K562 (cell line): ENCODE measurements at regions of chr2 and their contacts with region 1.

Region 1: GRCh38 chr2:172465417-172466334 is 38.3 kb downstream of the ITGA6 start:
- DNase-seq: peak; percentile 68 to 76 (median 72)
- ATAC-seq: peak; percentile 90
- H3K4me3 ChIP-seq: no peak overlapping the region
- H3K27ac ChIP-seq: no peak overlapping the region
- H3K4me1 ChIP-seq: no peaks in the 10 kb centered on the region
- H3K27me3 ChIP-seq: peaks cover 11 to 23% of the 10 kb centered on the region in 2 experiments; a peak in 4 of 5 replicates
- CTCF ChIP-seq: peak; percentile 86 to 92 (median 90)
- EP300 ChIP-seq: no peak
- POLR2A ChIP-seq: no peak
- RAD21 ChIP-seq: peak; percentile 90 to 92

Region 2: DNA sequence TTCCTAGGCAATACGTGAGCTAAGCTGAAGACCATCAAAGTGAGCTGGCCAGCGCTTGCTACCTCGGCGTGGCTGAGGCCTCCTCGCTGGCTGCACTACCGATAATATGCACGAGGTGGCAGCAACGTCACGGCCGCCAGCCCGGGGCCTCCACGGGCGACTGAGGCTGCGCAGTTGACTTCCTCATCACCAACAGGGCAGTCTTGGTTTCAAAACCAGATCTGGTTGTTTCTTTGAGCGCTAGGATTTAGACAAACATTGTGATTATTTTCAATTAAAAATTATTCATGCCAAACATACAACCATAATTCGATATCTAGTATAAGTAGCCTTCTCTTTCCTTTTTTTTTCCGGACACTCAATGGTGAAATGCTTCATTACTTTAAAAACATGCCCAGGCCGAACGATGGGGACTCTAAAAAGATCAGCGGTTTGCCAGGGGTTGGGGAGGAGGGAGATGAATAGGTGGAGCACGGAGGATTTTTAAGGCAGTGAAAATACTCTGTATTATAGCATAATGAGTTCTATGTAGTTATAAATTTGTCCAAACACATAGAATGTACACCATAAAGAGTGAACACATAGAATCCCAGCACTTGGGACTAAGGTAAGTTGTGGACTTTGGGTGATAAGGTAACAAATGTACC is 891.4 kb before region 1 on chr2:
- CTCF ChIA-PET with region 1: interaction called, 3 read pairs
- POLR2A ChIA-PET with region 1: no interaction called
- in situ Hi-C with region 1: loop called (anchors 25 kb)
- intact Hi-C with region 1: loop called (anchors 5 kb)
- DNase-seq: peak; percentile 90 to 99 (median 97)
- ATAC-seq: peak; percentile 99
- H3K4me3 ChIP-seq: no peak overlapping the region
- H3K27ac ChIP-seq: no peak overlapping the region
- H3K4me1 ChIP-seq: peaks cover 0 to 3% of the 10 kb centered on the region in 2 experiments; a peak in 1 of 5 replicates
- H3K27me3 ChIP-seq: no peaks in the 10 kb centered on the region
- CTCF ChIP-seq: peak; percentile 96 to 99 (median 97)
- EP300 ChIP-seq: 0 out of 2 replicates have a peak, but pooled peaks have one; percentile 3
- POLR2A ChIP-seq: no peak
- RAD21 ChIP-seq: peak; percentile 95 to 97

Region 3: GRCh38 chr2:171598713-171599319 is 866.9 kb before region 1 on chr2:
- CTCF ChIA-PET with region 1: no interaction called
- POLR2A ChIA-PET with region 1: no interaction called
- in situ Hi-C with region 1: loop called (anchors 25 kb)
- intact Hi-C with region 1: no loop called
- DNase-seq: peak; percentile 79 to 82 (median 81)
- ATAC-seq: peak; percentile 99
- H3K4me3 ChIP-seq: no peak overlapping the region
- H3K27ac ChIP-seq: no peak overlapping the region
- H3K4me1 ChIP-seq: no peaks in the 10 kb centered on the region
- H3K27me3 ChIP-seq: peaks cover 15 to 17% of the 10 kb centered on the region in 2 experiments; a peak in 4 of 5 replicates
- CTCF ChIP-seq: peak; percentile 76 to 90 (median 88)
- EP300 ChIP-seq: no peak
- POLR2A ChIP-seq: no peak
- RAD21 ChIP-seq: peak; percentile 70 to 89

Region 4: DNA sequence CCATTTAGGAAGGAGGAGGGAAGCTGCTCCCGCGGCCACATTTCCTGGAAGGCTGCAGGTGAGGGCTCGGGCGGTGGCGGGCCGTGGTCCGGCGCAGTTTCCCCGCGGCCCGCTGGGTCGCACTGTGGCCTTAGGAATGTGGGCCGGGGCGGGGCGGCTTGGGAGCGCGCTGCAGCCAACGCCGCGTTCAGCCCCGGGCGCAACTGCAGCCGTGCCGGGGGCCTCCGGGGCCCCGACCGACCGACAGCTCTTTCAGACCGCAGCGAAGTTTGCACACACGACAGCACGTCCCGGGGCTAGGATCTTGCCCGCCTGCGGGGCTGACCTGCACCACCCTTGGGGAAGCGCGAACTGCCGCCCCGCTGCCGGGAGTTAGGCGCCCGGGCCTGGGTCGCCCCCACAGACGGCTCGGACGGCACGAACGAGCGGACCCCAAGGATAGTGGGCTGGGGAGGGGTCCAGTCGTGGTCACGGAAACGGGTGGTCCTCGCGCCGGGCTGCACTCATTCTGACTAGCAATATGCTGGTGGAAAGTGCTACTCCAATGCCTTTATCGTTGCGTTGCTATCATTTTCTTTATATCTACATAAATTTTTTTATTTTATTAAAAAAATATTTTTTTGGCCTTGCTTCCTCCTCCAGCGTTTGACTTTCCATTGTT is 293.0 kb before region 1 on chr2:
- CTCF ChIA-PET with region 1: interaction called, 27 read pairs
- POLR2A ChIA-PET with region 1: no interaction called
- in situ Hi-C with region 1: loop called (anchors 5 kb)
- intact Hi-C with region 1: loop called (anchors 1 kb)
- DNase-seq: peak; percentile 63 to 80 (median 68)
- ATAC-seq: peak; percentile 100
- H3K4me3 ChIP-seq: peak overlapping the region; percentile 6; the same call in 1 of the 2 replicates
- H3K27ac ChIP-seq: no peak overlapping the region
- H3K4me1 ChIP-seq: peaks cover 0 to 7% of the 10 kb centered on the region in 2 experiments; a peak in 2 of 5 replicates
- H3K27me3 ChIP-seq: peaks cover 24 to 29% of the 10 kb centered on the region in 2 experiments
- CTCF ChIP-seq: peak; percentile 78 to 91 (median 80)
- EP300 ChIP-seq: no peak
- POLR2A ChIP-seq: no peak
- RAD21 ChIP-seq: peak; percentile 92 to 95

Region 5: DNA sequence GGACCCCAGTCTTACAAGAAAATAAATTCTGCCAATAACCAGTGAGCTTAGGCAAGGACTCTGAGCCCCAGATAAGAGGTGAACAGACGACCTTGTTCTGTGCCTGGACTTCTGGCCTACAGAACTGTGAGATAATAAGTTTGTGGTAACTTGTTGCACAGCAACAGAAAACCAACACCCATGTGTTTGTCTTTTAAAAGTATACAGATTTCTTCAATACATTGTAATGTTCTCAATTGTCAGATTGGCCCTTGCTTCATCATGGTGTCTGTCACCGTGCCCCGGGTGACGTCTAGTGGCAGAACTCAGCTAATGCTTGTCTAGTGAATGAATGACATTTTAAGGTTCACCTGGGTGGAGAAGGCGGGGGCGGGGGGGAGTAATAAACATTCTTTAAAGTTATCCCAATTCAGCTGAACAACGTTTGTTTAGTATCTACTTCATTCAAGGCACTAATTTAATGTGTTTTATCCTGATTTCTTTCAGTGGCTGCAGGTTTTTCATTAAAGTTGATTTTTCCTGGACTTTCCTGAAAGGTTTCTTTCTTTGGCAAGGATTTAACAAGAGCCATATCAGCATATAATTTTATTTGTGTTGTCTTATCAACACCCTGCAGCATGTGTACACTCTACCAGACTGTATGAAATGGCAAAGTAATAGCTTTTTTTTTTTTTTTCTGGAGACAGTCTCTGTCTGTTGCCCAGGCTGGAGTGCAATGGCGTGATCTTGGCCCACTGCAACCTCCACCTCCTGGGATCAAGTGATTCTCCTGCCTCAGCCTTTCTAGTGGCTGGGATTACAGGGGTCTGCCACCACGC is 239.2 kb before region 1 on chr2:
- CTCF ChIA-PET with region 1: no interaction called
- POLR2A ChIA-PET with region 1: no interaction called
- in situ Hi-C with region 1: no loop called
- intact Hi-C with region 1: loop called (anchors 5 kb)
- DNase-seq: peak; percentile 49 to 54 (median 52)
- ATAC-seq: peak; percentile 93
- H3K4me3 ChIP-seq: no peak overlapping the region
- H3K27ac ChIP-seq: no peak overlapping the region
- H3K4me1 ChIP-seq: no peaks in the 10 kb centered on the region
- H3K27me3 ChIP-seq: peaks cover 13 to 43% of the 10 kb centered on the region in 2 experiments
- CTCF ChIP-seq: peak; percentile 68 to 70 (median 68)
- EP300 ChIP-seq: no peak
- POLR2A ChIP-seq: no peak
- RAD21 ChIP-seq: peak; percentile 40 to 59; a peak in 3 of 4 replicates

Region 6: GRCh38 chr2:172285010-172285621 is 180.6 kb before region 1 on chr2:
- CTCF ChIA-PET with region 1: interaction called, 3 read pairs
- POLR2A ChIA-PET with region 1: no interaction called
- in situ Hi-C with region 1: no loop called
- intact Hi-C with region 1: loop called (anchors 10 kb)
- DNase-seq: no peak
- ATAC-seq: no peak
- H3K4me3 ChIP-seq: no peak overlapping the region
- H3K27ac ChIP-seq: no peak overlapping the region
- H3K4me1 ChIP-seq: no peaks in the 10 kb centered on the region
- H3K27me3 ChIP-seq: peaks cover 2 to 17% of the 10 kb centered on the region in 2 experiments; a peak in 2 of 5 replicates
- CTCF ChIP-seq: no peak
- EP300 ChIP-seq: no peak
- POLR2A ChIP-seq: no peak
- RAD21 ChIP-seq: no peak

Region 7: DNA sequence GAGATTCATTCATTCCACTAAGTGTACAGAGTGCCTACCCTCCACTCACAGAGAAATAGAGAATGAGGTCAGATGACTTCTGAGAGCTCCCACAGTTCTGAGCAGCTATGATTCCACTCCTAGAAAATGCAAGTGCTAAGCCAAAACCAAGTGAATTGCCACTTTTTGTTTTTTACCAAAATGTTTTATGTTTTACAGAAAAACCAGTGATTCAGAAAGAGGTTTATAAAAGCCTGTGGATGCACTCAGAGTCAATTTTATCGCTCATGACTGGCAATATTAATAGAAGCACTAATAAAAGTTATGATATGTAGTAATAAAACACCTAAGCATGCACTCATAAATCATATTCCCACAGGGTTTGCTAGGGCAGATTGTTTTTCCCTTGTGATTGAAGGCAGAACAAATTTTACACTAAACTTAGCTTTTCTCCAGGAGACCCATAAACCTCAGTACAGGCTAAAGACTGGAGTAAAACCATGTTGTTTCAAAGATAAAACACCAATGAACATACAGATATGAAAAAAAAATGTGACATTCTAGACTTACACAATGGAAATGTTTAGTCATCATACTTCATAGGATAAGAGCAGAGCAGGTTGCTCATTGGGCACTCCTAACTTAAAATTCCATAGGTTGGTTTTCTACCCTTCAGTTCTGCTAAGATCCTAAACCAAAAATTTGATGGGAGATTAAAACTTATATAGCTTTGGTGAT is 157.7 kb after region 1 on chr2:
- CTCF ChIA-PET with region 1: no interaction called
- POLR2A ChIA-PET with region 1: no interaction called
- in situ Hi-C with region 1: no loop called
- intact Hi-C with region 1: no loop called
- DNase-seq: no peak
- ATAC-seq: no peak
- H3K4me3 ChIP-seq: no peak overlapping the region
- H3K27ac ChIP-seq: no peak overlapping the region
- H3K4me1 ChIP-seq: no peaks in the 10 kb centered on the region; a peak in 1 of 5 replicates
- H3K27me3 ChIP-seq: no peaks in the 10 kb centered on the region
- CTCF ChIP-seq: no peak
- EP300 ChIP-seq: no peak
- POLR2A ChIP-seq: no peak
- RAD21 ChIP-seq: no peak

Region 8: GRCh38 chr2:172674034-172674967 is 208.6 kb after region 1 on chr2:
- CTCF ChIA-PET with region 1: no interaction called
- POLR2A ChIA-PET with region 1: no interaction called
- in situ Hi-C with region 1: no loop called
- intact Hi-C with region 1: loop called (anchors 1 kb)
- DNase-seq: peak; percentile 53 to 77 (median 64)
- ATAC-seq: peak; percentile 100
- H3K4me3 ChIP-seq: no peak overlapping the region
- H3K27ac ChIP-seq: no peak overlapping the region
- H3K4me1 ChIP-seq: peaks cover 4 to 6% of the 10 kb centered on the region in 2 experiments; a peak in 4 of 5 replicates
- H3K27me3 ChIP-seq: no peaks in the 10 kb centered on the region
- CTCF ChIP-seq: peak; percentile 82 to 92 (median 91)
- EP300 ChIP-seq: no peak
- POLR2A ChIP-seq: no peak
- RAD21 ChIP-seq: peak; percentile 54 to 85